Transverse colon (tissue), 4 donors: ENCODE measurements at regions of chrX and their contacts with region 1.

Region 1: GRCh38 chrX:66994729-66995128 is 355.9 kb upstream of the EDA2R start:
- DNase-seq: no peak
- H3K4me3 ChIP-seq: no peak overlapping the region
- H3K27ac ChIP-seq: no peak overlapping the region
- H3K4me1 ChIP-seq: no peaks in the 10 kb centered on the region
- H3K27me3 ChIP-seq: no peaks in the 10 kb centered on the region
- CTCF ChIP-seq: no peak
- EP300 ChIP-seq: no peak
- POLR2A ChIP-seq: no peak

Region 2: GRCh38 chrX:67094061-67094460 is 99.3 kb after region 1 on chrX:
- in situ Hi-C with region 1: loop called in 1 of 4 experiments (anchors 25 kb)
- intact Hi-C with region 1: no loop called
- DNase-seq: no peak
- H3K4me3 ChIP-seq: no peak overlapping the region
- H3K27ac ChIP-seq: no peak overlapping the region
- H3K4me1 ChIP-seq: no peaks in the 10 kb centered on the region
- H3K27me3 ChIP-seq: no peaks in the 10 kb centered on the region
- CTCF ChIP-seq: no peak
- EP300 ChIP-seq: no peak
- POLR2A ChIP-seq: no peak